ENCODE measurements at regions of chr1 and their contacts with region 1.

Region 1: DNA sequence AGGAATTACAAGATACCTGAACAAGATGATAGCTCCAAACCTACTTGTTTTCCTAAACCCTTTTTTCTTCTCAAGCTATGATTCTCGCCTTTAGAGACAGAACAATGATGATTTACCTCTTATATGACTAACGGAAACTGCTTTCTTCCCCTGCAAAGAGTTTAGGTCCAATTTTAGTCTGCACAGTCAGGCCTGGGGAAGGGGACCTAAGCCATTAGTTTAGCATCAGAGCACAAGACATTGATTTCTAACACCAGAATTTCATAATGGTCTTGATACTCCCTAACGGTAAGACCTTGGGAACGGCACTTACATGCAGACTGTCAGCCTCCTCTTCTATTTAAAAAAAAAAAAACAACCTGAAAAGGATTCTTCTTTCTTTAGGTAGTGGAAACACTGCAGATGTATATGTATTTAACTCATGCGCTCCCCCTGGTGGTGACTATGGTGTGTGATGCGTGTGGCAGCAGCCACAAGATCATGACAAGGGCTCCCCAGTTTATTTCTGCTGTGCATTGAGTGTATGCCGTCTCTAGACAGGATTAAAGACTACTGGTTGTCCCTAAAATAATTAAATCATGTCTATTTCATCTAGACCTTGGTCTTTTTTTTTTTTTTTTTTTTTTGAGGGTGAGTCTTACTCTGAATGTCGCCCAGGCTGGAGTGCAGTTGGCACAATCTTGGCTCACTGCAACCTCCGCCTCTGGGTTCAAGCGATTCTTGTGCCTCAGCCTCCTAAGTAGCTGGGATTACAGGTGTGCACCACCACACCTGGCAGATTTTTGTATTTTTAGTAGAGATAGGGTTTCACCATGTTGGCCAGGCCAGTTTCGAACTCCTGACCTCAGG is 37.3 kb upstream of the TMEM222 start:
- DNase-seq: peak; percentile 61
- H3K4me3 ChIP-seq: no peak overlapping the region
- CTCF ChIP-seq: peak; percentile 72

Region 2: GRCh38 chr1:27071049-27071416 is 213.6 kb before region 1 on chr1:
- in situ Hi-C with region 1: loop called (anchors 25 kb)
- DNase-seq: no peak
- H3K4me3 ChIP-seq: no peak overlapping the region
- CTCF ChIP-seq: no peak

Measured in astrocyte of the cerebellum (primary cell).